Heart right ventricle (tissue), 16 donors: ENCODE measurements at regions of chr5 and their contacts with region 1.

Region 1: DNA sequence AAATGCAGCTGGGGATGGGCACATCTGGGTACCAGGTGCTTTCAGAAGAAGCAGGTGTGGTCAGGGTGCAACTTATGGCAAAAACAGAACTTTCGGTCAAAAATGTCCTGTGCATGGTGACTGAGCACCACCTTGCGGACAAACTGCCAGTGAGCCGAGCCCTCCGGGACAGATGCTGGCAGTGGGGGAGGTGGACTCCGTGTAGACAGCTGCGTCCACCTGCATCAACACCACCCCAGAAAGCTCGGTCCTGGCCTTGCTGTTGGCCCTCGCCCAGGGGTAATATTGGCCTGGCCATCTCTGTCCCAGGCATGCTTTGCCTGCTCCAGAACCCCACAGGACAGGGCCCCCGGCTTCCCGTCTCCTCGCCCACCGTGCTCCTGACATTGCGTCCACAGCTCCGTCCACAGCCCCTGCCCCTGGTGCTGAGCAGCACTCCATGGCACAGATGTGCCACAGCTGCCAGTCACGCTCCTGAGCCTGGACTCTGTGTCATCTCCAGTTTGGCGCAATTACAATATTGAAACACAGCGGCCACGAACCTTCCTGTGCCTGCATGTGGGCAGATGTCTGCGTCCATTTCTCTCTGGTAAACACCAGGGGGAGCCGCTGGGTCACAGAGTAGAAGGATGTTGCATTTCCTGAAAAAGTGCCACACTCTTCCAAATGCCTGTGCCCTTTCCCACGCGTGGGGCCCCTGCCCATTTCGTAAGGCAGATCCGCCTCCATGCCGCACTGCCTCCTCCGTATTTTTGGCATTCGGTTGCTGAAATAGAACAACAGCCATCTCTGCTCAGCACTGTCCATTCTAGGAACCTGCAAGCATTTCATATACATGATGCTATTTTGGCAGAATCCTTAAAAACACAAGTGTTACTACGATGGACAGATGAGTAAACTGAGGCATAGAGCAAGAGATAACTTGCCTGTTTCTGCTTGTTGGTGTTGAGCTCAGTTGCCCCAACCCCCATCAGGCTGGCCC is 33.4 kb upstream of the SLC6A19 start:
- DNase-seq: peak; percentile 56 to 73
- ATAC-seq: peak; percentile 53 to 88 (median 79)
- H3K4me3 ChIP-seq: peak overlapping the region in 7 of 10 donors; percentile 4 to 29 (median 16)
- H3K27ac ChIP-seq: no peak overlapping the region
- H3K4me1 ChIP-seq: peaks cover 0 to 12% (median 9%) of the 10 kb centered on the region in 9 donors
- H3K27me3 ChIP-seq: peaks cover 0 to 8% (median 0%) of the 10 kb centered on the region in 7 donors
- CTCF ChIP-seq: peak; percentile 42 to 74 (median 66)

Region 2: GRCh38 chr5:923281-923873 is 244.6 kb before region 1 on chr5:
- intact Hi-C with region 1: loop called in 6 of 10 experiments (anchors 1 to 10 kb)
- DNase-seq: peak; percentile 75 to 88
- ATAC-seq: peak; percentile 84 to 95 (median 91)
- H3K4me3 ChIP-seq: no peak overlapping the region
- H3K27ac ChIP-seq: no peak overlapping the region
- H3K4me1 ChIP-seq: peaks cover 0 to 19% (median 11%) of the 10 kb centered on the region in 9 donors
- H3K27me3 ChIP-seq: peaks cover 0 to 45% (median 29%) of the 10 kb centered on the region in 7 donors
- CTCF ChIP-seq: peak; percentile 65 to 95 (median 87)

Region 3: DNA sequence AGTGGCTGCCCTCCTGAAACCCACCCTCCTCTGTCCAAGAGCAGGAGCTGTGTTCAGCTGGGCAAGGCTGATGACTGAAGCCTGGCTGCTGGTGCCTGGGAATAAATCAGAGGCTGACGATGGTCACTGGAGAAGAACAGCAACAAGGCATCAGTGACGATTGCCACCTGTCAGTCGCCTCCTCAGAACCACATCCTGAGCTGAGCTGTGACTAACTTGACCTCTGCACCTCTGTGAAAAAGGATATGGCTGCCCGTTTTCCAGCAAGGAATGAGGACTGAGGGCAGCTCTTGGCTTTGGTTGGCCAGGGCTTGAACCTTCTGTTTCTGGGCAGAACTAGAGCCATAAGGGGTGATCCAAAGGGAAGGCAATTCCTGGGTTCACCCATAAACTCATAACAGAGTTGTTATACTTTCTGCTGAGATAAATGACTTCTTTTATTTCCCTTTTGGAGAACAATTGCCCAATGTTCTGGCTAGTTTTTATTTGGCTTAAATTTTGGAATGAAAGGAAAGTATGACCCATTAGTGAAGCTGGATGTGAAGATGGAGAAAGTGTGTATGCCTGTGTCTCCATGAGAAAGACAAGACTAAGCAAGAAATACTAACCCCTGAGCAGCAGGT is 235.3 kb before region 1 on chr5:
- intact Hi-C with region 1: loop called in 2 of 10 experiments (anchors 5 to 10 kb)
- DNase-seq: no peak
- ATAC-seq: peak in 6 of 8 donors; percentile 30 to 66 (median 54)
- H3K4me3 ChIP-seq: no peak overlapping the region
- H3K27ac ChIP-seq: peak overlapping the region in 9 of 10 donors; percentile 1 to 51 (median 22)
- H3K4me1 ChIP-seq: peaks cover 0 to 7% (median 0%) of the 10 kb centered on the region in 9 donors
- H3K27me3 ChIP-seq: peaks cover 0 to 9% (median 5%) of the 10 kb centered on the region in 7 donors
- CTCF ChIP-seq: no peak

Region 4: GRCh38 chr5:989961-990530 is 178.0 kb before region 1 on chr5:
- intact Hi-C with region 1: loop called in 1 of 10 experiments (anchors 5 kb)
- DNase-seq: peak; percentile 73 to 81
- ATAC-seq: peak; percentile 63 to 88 (median 76)
- H3K4me3 ChIP-seq: no peak overlapping the region
- H3K27ac ChIP-seq: peak overlapping the region in 9 of 10 donors; percentile 22 to 81 (median 65)
- H3K4me1 ChIP-seq: peaks cover 6 to 56% (median 26%) of the 10 kb centered on the region in 9 donors
- H3K27me3 ChIP-seq: peaks cover 0 to 8% (median 0%) of the 10 kb centered on the region in 7 donors
- CTCF ChIP-seq: peak; percentile 33 to 84 (median 70)

Region 5: GRCh38 chr5:1479581-1480188 is 311.7 kb after region 1 on chr5:
- intact Hi-C with region 1: loop called in 1 of 10 experiments (anchors 10 kb)
- DNase-seq: peak in 1 of 2 donors; percentile 44
- ATAC-seq: peak in 4 of 8 donors; percentile 3 to 38 (median 20)
- H3K4me3 ChIP-seq: peak overlapping the region in 1 of 10 donors; percentile 9
- H3K27ac ChIP-seq: peak overlapping the region in 4 of 10 donors; percentile 21 to 92 (median 42)
- H3K4me1 ChIP-seq: peaks cover 0 to 52% (median 0%) of the 10 kb centered on the region in 9 donors
- H3K27me3 ChIP-seq: no peaks in the 10 kb centered on the region
- CTCF ChIP-seq: peak in 8 of 9 donors; percentile 37 to 81 (median 64)

Region 6: GRCh38 chr5:1652596-1653345 is 484.8 kb after region 1 on chr5:
- intact Hi-C with region 1: loop called in 5 of 10 experiments (anchors 5 to 10 kb)
- DNase-seq: no peak
- ATAC-seq: peak in 4 of 8 donors; percentile 15 to 55 (median 34)
- H3K4me3 ChIP-seq: no peak overlapping the region
- H3K27ac ChIP-seq: no peak overlapping the region
- H3K4me1 ChIP-seq: peaks cover 0 to 10% (median 6%) of the 10 kb centered on the region in 9 donors
- H3K27me3 ChIP-seq: peaks cover 5 to 76% (median 58%) of the 10 kb centered on the region in 7 donors
- CTCF ChIP-seq: no peak